Heart right ventricle (tissue), 16 donors: ENCODE measurements at regions of chr19 and their contacts with region 1.

Region 1: DNA sequence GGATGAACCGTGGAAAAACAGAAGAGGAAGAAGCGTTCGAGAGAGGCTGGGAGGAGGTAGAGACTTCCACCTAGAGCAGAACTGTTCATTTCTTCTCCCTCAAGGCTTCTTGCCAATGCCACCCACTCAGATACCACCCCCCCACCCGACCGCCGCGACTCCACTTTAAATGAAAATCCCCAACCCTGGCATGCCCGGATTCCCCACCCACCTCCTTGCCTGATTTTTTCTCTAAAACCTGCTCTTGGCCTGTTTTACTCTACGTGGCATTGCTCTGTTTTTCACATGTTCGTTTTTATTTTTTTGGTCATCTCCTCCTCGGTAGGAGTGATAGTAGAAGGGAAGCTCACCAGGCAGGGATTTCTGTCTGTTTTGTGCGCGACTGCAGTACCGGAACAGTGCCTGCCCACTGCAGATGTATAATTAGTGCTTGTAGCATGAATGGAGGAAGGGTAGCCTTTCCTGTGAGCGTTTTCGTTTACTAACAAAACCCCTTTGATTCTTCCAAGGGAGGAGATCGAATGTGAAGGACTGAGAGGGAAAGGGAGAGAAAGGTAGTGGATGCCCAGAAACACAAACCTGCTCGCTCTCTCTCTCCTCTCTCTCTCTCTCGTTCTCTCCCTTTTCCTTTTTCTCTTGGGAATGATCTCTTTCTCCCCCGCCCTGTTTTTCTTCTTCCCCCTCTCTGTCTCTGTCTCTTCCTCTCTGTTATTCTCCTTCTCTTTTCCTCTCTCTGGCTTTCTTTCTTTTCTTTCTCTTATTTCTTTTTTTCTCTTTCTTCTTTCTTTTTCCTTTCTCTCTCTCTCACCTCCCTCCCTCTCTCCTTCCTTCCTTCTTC is 2.2 kb downstream of the CD70 start:
- DNase-seq: no peak
- ATAC-seq: no peak
- H3K4me3 ChIP-seq: no peak overlapping the region
- H3K27ac ChIP-seq: no peak overlapping the region
- H3K4me1 ChIP-seq: peaks cover 0 to 45% (median 19%) of the 10 kb centered on the region in 9 donors
- H3K27me3 ChIP-seq: peaks cover 22 to 100% (median 96%) of the 10 kb centered on the region in 7 donors
- CTCF ChIP-seq: no peak

Region 2: DNA sequence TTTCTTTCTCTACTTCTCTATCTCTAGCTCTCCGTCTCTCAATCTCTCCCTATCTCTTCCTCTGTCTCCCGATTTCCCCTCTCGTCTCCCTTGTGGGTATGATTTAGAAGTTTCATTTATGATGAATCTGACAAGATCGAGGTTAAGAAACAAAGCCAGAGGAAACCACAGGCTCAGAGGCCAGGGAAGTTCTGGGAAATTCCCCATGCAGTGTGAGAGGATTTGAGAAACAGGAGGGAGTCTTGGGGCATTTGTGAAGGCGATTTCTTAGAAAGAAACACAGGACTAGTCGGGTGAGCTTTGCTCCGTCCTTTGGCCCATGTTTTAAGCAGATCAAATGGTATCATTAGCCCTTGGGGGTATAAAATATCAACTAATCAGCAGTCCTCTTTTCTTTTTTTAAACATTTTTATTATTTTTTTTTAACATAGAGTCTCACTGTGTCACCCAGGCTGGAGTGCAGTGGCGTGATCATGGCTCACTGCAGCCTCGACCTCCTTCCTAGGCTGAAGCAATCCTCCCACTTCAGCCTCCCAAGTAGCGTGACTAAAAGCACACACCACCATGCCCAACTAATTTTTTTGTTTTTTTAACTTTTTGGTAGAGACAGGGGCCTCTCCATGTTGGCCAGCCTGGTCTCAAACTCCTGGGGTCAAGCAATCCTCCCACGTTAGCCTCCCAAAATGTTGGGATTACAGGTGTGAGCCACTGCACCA is 32.1 kb before region 1 on chr19:
- intact Hi-C with region 1: loop called in 1 of 10 experiments (anchors 1 kb)
- DNase-seq: no peak
- ATAC-seq: no peak
- H3K4me3 ChIP-seq: no peak overlapping the region
- H3K27ac ChIP-seq: no peak overlapping the region
- H3K4me1 ChIP-seq: peaks cover 0 to 18% (median 0%) of the 10 kb centered on the region in 9 donors
- H3K27me3 ChIP-seq: peaks cover 0 to 56% (median 26%) of the 10 kb centered on the region in 7 donors
- CTCF ChIP-seq: no peak

Region 3: GRCh38 chr19:6705931-6706632 is 117.4 kb after region 1 on chr19:
- intact Hi-C with region 1: no loop called
- DNase-seq: no peak
- ATAC-seq: no peak
- H3K4me3 ChIP-seq: no peak overlapping the region
- H3K27ac ChIP-seq: no peak overlapping the region
- H3K4me1 ChIP-seq: no peaks in the 10 kb centered on the region
- H3K27me3 ChIP-seq: peaks cover 0 to 44% (median 35%) of the 10 kb centered on the region in 7 donors
- CTCF ChIP-seq: no peak